ENCODE measurements at regions of chr2 and their contacts with region 1.

Region 1: GRCh38 chr2:75199428-75200011 is at the start of gene TACR1:
- DNase-seq: peak; percentile 62 to 86
- ATAC-seq: peak; percentile 83 to 87
- H3K4me3 ChIP-seq: peak within 1 kb of the TSS; percentile 56
- H3K27ac ChIP-seq: peak within 1 kb of the TSS; percentile 4 to 59; a peak in 5 of 6 replicates
- H3K4me1 ChIP-seq: peaks cover 6% of the 10 kb centered on the region
- CTCF ChIP-seq: peak; percentile 77
- EP300 ChIP-seq: no peak
- POLR2A ChIP-seq: no peak
- RAD21 ChIP-seq: peak; percentile 84 to 90
- polyA plus RNA-seq, gene TACR1: 0.92 and 1.0 TPM in 2 replicates

Region 2: GRCh38 chr2:75018162-75018561 is 181.4 kb before region 1 on chr2:
- CTCF ChIA-PET with region 1: no interaction called
- POLR2A ChIA-PET with region 1: no interaction called
- DNase-seq: no peak
- ATAC-seq: no peak
- H3K4me3 ChIP-seq: no peak overlapping the region
- H3K27ac ChIP-seq: no peak overlapping the region
- H3K4me1 ChIP-seq: peaks cover 15% of the 10 kb centered on the region; the same call in 1 of the 3 replicates
- CTCF ChIP-seq: no peak
- EP300 ChIP-seq: no peak
- POLR2A ChIP-seq: no peak
- RAD21 ChIP-seq: no peak

Region 3: DNA sequence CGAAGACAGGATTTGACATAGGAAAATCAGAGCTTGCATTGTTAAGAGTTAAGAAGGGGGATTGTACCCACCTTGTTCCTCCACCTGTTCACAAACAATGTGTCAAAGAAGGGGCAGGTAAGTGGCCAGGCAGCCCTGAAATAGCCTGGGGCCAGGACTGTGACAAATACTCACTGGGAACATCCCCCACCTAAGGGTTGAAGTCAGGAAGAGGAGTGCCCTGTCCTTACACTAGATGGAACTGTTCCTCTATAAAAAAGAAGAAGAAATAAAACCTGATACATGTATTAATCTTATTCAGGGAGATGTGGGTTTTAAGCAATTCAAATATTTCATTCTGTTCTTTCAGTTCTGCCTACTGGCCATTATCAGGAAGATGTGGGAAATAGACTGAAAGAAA is 42.1 kb before region 1 on chr2:
- CTCF ChIA-PET with region 1: interaction called, 14 read pairs
- POLR2A ChIA-PET with region 1: no interaction called
- DNase-seq: peak in 1 of 2 experiments; percentile 28
- ATAC-seq: peak; percentile 70 to 74; a peak in 5 of 6 replicates
- H3K4me3 ChIP-seq: no peak overlapping the region
- H3K27ac ChIP-seq: no peak overlapping the region
- H3K4me1 ChIP-seq: peaks cover 15% of the 10 kb centered on the region
- CTCF ChIP-seq: peak; percentile 37
- EP300 ChIP-seq: no peak
- POLR2A ChIP-seq: no peak
- RAD21 ChIP-seq: peak; percentile 57 to 60

Region 4: DNA sequence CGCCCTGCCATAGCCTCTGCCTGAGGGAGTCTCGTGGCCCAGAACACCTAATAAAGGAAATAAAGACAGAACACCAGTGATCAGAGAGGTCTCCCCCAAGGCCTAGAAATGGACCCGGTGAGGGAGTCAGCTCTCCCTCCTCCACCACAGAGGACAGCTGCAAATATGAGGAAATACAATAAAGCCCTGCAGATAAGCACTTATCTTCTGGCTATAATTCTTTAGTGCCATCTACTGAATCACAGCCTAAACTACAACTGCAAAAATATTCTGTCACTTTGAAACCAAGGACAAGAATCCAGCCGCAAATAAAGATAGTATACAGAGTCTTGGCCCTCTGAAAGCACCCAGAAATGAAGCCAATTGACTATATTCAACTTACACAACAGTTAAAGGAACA is 42.2 kb after region 1 on chr2:
- CTCF ChIA-PET with region 1: interaction called, 60 read pairs
- POLR2A ChIA-PET with region 1: no interaction called
- DNase-seq: peak in 1 of 2 experiments; percentile 63
- ATAC-seq: peak in 1 of 2 experiments; percentile 47; a peak in 3 of 6 replicates
- H3K4me3 ChIP-seq: no peak overlapping the region
- H3K27ac ChIP-seq: peak overlapping the region in 1 of 2 experiments; percentile 82; a peak in 3 of 6 replicates
- H3K4me1 ChIP-seq: peaks cover 20% of the 10 kb centered on the region
- CTCF ChIP-seq: no peak; the same call in 2 of the 3 replicates
- EP300 ChIP-seq: no peak
- POLR2A ChIP-seq: no peak
- RAD21 ChIP-seq: peak; percentile 28 to 57; a peak in 3 of 5 replicates

Region 5: DNA sequence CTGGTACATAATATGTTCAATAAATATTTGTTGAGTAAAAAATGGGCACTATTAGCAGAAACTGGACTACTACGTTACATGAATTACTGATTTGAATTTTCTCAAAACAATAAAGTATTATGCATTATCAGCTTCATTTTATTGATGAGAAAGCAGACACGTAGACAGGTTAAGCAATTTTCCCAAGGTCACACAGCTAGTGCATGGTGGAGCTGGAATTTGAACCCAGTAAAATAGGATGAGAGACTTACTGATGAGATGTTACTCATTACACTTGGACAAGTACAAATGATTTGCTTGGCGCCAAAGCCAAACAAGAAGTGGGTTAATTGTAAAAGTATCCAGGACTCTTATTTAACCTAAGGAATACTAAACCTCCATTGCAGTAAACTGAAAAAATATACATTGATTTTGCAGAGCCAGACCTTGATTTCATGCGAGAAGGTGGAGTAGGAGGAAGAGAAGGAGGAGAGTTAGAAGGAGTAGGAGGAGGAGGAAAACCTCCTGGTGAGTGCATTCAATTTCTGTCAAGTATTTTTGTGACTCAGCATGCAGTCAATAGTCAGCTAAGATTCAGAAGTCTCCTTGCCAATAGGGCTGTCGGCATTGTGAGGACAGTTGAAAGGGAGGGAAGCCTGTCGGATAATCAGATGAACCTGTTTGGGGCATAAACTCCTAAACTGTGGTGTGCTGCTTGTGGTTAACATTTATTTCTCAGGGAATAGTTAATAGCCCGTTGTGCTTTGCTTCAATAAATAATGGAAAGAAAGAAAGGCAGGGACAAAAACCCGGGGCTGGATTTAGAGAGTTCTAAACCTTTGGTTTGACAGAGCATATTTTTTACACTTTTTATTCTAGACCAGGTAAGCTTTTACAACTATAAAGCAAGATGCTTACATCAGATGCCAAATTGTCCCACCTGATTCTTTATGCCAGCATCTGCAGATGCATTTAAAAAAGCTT is 76.9 kb after region 1 on chr2:
- CTCF ChIA-PET with region 1: interaction called, 28 read pairs
- POLR2A ChIA-PET with region 1: no interaction called
- DNase-seq: peak; percentile 40 to 47
- ATAC-seq: peak; percentile 88 to 94; a peak in 5 of 6 replicates
- H3K4me3 ChIP-seq: no peak overlapping the region; the same call in 2 of the 3 replicates
- H3K27ac ChIP-seq: peak overlapping the region; percentile 25 to 57; a peak in 4 of 6 replicates
- H3K4me1 ChIP-seq: peaks cover 30% of the 10 kb centered on the region
- CTCF ChIP-seq: no peak
- EP300 ChIP-seq: no peak
- POLR2A ChIP-seq: no peak
- RAD21 ChIP-seq: no peak

Region 6: DNA sequence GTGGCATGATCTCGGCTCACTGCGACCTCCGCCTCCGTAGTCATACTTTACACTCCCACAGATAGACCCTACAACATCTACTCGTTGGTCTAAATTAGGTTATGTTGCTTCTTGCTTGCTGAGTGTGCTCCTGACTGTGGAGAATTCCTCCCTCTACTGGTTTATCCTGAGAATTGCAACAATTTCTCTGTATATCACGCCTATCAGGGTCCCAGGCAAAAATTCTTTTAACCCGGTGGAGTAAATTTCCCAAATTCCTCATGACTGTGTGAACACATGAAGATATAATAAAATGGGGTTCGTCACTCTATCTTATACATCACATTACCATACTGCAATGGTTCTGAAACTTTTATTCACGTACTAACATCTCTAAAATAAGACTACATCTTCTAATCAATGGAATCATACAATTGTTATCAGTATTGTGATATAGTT is 204.5 kb after region 1 on chr2:
- CTCF ChIA-PET with region 1: interaction called, 57 read pairs
- POLR2A ChIA-PET with region 1: interaction called, 5 read pairs
- DNase-seq: peak; percentile 17 to 65
- ATAC-seq: peak; percentile 98 to 99
- H3K4me3 ChIP-seq: no peak overlapping the region
- H3K27ac ChIP-seq: no peak overlapping the region
- H3K4me1 ChIP-seq: no peaks in the 10 kb centered on the region
- CTCF ChIP-seq: peak; percentile 97
- EP300 ChIP-seq: no peak
- POLR2A ChIP-seq: no peak
- RAD21 ChIP-seq: peak; percentile 93 to 96

Region 7: DNA sequence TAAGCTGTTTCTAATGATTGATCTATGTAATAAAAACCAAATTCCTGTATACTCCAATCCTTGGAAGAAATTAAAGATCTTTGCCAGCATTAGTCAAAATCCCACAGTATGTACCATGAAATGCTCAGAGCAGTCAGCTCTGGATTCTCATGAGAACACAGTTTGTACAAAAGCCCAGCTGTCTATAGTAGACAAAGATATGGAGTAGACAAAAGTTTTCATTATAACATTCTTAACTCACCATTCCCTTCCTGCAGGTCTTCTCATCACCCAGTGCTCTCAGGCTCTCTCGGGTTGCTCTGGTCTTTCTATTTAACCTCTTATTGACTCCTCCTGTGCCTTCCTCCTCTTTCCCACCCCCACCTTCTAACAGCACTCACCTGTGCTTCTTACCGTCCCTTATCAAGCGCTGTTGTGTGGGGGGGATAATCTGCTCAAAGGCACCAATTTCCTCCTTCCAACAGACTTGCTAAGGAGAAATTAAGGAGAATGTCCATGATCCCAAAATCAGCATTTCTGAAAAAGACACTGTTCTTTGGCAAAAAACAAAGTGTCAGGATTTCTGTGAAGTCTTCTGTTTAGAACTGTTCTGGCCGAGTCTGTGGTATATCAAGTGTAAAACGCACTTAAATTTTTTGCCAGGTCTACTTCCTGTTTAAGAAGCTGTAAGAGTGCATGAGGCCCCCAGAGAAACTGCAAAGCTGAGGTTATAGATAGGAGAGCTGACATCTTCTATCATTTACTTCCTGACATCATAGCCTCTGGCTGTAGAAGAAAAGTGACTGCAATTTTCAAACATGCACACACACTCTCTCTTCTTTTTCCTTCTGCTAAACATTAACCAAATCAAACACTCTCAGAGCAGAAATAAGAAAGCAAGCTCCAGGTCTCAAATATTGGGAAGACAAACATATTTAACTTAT is 217.2 kb after region 1 on chr2:
- CTCF ChIA-PET with region 1: interaction called, 12 read pairs
- POLR2A ChIA-PET with region 1: no interaction called
- DNase-seq: peak in 1 of 2 experiments; percentile 10
- ATAC-seq: peak; percentile 39 to 81; a peak in 4 of 6 replicates
- H3K4me3 ChIP-seq: no peak overlapping the region
- H3K27ac ChIP-seq: 0 out of 6 replicates have a peak overlapping the region, but pooled peaks of 1 of the 2 experiments have one; percentile 1
- H3K4me1 ChIP-seq: peaks cover 14% of the 10 kb centered on the region
- CTCF ChIP-seq: no peak
- EP300 ChIP-seq: no peak
- POLR2A ChIP-seq: no peak
- RAD21 ChIP-seq: no peak